ENCODE measurements at regions of chr4 and their contacts with region 1.

Region 1: DNA sequence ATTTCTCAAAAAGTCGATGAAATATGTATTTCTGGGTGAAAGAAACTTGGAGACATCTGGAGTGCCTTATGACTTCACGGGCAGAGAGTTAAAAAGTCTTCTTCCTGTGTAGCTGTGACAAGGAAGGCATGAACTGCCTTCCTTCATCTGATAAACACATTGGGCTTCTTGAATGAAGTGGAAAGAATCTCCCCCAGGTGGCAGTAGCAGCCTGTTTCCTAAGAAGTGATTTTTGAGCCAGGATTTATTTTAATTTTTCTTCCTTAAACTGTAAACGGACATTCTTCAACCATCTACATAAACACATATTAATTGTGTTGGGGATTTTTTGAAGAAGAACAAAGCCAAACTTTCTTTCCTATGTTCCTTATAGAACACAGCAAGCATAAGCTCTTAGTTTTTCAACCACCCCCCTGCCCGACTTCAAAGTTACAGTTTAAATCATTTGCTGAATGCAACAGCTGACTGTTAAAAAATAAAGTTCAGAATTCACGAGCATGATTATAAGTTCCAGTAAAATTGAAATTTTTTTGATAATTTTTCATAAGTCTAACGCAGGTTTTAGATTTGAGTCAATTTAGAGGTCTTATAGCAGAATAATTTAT is 980 bp upstream of the GIMD1 start:
- DNase-seq: peak in 1 of 2 donors; percentile 11
- ATAC-seq: no peak
- H3K4me3 ChIP-seq: no peak overlapping the region
- H3K27ac ChIP-seq: no peak overlapping the region
- H3K4me1 ChIP-seq: peaks cover 2 to 30% (median 15%) of the 10 kb centered on the region in 9 donors
- H3K27me3 ChIP-seq: peaks cover 0 to 22% (median 0%) of the 10 kb centered on the region in 7 donors
- CTCF ChIP-seq: peak in 8 of 9 donors; percentile 46 to 79 (median 60)

Region 2: DNA sequence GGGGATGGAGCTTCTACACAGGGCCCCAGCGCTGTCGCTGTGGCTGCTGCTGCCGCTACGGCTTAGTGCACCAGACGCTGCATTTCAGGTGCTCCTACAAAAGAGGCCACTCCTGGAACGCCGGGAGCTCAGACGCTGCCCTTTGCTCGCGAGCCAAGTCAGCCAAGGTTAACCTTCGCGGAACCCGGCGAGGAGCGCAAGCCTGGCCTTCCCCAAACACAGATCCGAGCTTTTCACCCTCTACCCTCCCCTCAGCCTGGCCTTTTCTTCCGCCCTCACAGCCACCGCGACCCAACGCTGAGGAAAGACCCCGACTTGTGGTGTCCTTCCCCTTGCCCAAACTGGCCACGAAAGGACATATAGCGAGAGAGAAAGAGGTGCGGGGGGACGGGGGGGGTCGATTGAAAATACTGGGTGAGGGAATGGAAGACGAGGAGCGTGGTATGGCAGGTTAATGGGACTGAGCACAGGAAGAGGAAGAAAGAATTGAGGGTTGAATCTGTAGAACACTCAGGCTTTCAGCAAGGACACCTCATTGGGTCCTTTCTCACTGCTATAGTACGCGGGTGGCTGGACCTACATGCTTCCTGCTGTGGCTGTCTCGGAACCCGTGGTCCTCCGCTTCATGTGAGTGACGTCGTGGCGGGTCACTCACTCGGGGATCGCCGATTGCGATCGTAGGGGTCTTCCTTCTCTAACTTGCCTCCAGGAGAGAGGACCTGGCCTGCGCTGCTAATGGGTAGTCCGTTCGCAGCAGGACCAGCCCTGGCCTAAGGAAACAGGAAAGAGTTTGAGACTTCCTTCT is 53.4 kb before region 1 on chr4 and contains the starts of genes AIMP1 and TBCK:
- intact Hi-C with region 1: loop called in 1 of 10 experiments (anchors 5 kb)
- DNase-seq: peak; percentile 84 to 93
- ATAC-seq: peak; percentile 96 to 99 (median 98)
- H3K4me3 ChIP-seq: peak within 1 kb of the TSS; percentile 74 to 93 (median 88)
- H3K27ac ChIP-seq: peak within 1 kb of the TSS; percentile 86 to 97 (median 90)
- H3K4me1 ChIP-seq: peaks cover 4 to 52% (median 40%) of the 10 kb centered on the region in 9 donors
- H3K27me3 ChIP-seq: no peaks in the 10 kb centered on the region
- CTCF ChIP-seq: no peak
- total RNA-seq, gene AIMP1: 33.0 to 38.6 (median 36.0) TPM
- total RNA-seq, gene TBCK: 8.3 to 22.8 (median 18.4) TPM

Region 3: GRCh38 chr4:106409893-106410889 is 40.6 kb after region 1 on chr4:
- intact Hi-C with region 1: no loop called
- DNase-seq: no peak
- ATAC-seq: no peak
- H3K4me3 ChIP-seq: no peak overlapping the region
- H3K27ac ChIP-seq: no peak overlapping the region
- H3K4me1 ChIP-seq: no peaks in the 10 kb centered on the region
- H3K27me3 ChIP-seq: no peaks in the 10 kb centered on the region
- CTCF ChIP-seq: no peak

Region 4: GRCh38 chr4:106502106-106502699 is 132.6 kb after region 1 on chr4:
- intact Hi-C with region 1: loop called in 8 of 10 experiments (anchors 1 to 5 kb)
- DNase-seq: peak; percentile 37 to 42
- ATAC-seq: peak in 1 of 8 donors; percentile 67
- H3K4me3 ChIP-seq: no peak overlapping the region
- H3K27ac ChIP-seq: no peak overlapping the region
- H3K4me1 ChIP-seq: peaks cover 0 to 6% (median 0%) of the 10 kb centered on the region in 9 donors
- H3K27me3 ChIP-seq: peaks cover 0 to 7% (median 0%) of the 10 kb centered on the region in 7 donors
- CTCF ChIP-seq: peak; percentile 29 to 76 (median 65)

Region 5: DNA sequence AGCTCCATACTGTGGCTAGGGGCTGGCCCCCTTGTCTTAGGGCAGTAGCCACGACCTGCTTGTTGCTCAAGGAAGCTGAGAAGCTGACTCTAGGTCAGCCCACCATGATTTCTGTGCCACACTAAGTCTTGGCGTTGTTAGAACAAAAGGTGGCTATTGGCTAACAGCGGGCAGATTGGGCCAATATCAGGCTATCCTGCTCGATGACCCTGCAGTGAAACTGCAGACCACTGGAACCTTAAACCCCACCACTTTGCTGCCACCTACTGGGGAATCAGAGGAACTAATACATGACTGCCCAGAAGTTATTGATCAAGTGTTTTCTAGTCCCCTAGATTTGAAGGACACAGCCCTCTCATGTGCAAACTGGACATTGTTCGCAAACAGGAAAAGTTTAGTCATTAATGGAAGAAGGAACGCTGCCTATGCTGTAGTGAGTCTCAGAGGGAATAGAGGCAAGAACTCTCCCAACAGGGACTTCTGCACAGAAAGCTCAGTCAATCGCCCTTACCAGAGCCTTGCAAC is 1367.4 kb after region 1 on chr4:
- intact Hi-C with region 1: loop called in 1 of 10 experiments (anchors 10 kb)
- DNase-seq: peak in 1 of 2 donors; percentile 38
- ATAC-seq: peak in 6 of 8 donors; percentile 37 to 63 (median 52)
- H3K4me3 ChIP-seq: no peak overlapping the region
- H3K27ac ChIP-seq: no peak overlapping the region
- H3K4me1 ChIP-seq: peaks cover 0 to 41% (median 10%) of the 10 kb centered on the region in 9 donors
- H3K27me3 ChIP-seq: no peaks in the 10 kb centered on the region
- CTCF ChIP-seq: peak; percentile 51 to 88 (median 78)